ENCODE measurements at regions of chr20 and their contacts with region 1.

Region 1: GRCh38 chr20:40797425-40797824 is 108.4 kb upstream of the MAFB start:
- DNase-seq: no peak
- H3K4me3 ChIP-seq: no peak overlapping the region; a peak in 1 of 4 replicates
- H3K27ac ChIP-seq: no peak overlapping the region
- H3K4me1 ChIP-seq: no peaks in the 10 kb centered on the region
- H3K27me3 ChIP-seq: no peaks in the 10 kb centered on the region
- CTCF ChIP-seq: peak; percentile 51
- EP300 ChIP-seq: no peak
- RAD21 ChIP-seq: peak; percentile 71

Region 2: GRCh38 chr20:40813708-40814630 is 16.5 kb after region 1 on chr20:
- CTCF ChIA-PET with region 1: interaction called, 12 read pairs
- POLR2A ChIA-PET with region 1: no interaction called
- DNase-seq: peak; percentile 55
- H3K4me3 ChIP-seq: no peak overlapping the region
- H3K27ac ChIP-seq: no peak overlapping the region
- H3K4me1 ChIP-seq: peaks cover 0 to 22% of the 10 kb centered on the region in 2 experiments; a peak in 2 of 4 replicates
- H3K27me3 ChIP-seq: no peaks in the 10 kb centered on the region
- CTCF ChIP-seq: no peak
- EP300 ChIP-seq: peak in 1 of 2 experiments; percentile 39; a peak in 1 of 4 replicates
- RAD21 ChIP-seq: no peak

Region 3: GRCh38 chr20:40956542-40957264 is 159.3 kb after region 1 on chr20:
- CTCF ChIA-PET with region 1: interaction called, 11 read pairs
- POLR2A ChIA-PET with region 1: no interaction called
- DNase-seq: no peak
- H3K4me3 ChIP-seq: no peak overlapping the region
- H3K27ac ChIP-seq: no peak overlapping the region
- H3K4me1 ChIP-seq: no peaks in the 10 kb centered on the region
- H3K27me3 ChIP-seq: no peaks in the 10 kb centered on the region
- CTCF ChIP-seq: no peak
- EP300 ChIP-seq: no peak
- RAD21 ChIP-seq: no peak